Psoas muscle (tissue), 8 donors: ENCODE measurements at regions of chr1 and their contacts with region 1.

Region 1: GRCh38 chr1:214165850-214166374 is 115.0 kb upstream of the SMYD2 start:
- DNase-seq: no peak
- ATAC-seq: no peak
- H3K4me3 ChIP-seq: no peak overlapping the region
- H3K27ac ChIP-seq: no peak overlapping the region
- H3K4me1 ChIP-seq: no peaks in the 10 kb centered on the region
- H3K27me3 ChIP-seq: no peaks in the 10 kb centered on the region
- CTCF ChIP-seq: no peak

Region 2: DNA sequence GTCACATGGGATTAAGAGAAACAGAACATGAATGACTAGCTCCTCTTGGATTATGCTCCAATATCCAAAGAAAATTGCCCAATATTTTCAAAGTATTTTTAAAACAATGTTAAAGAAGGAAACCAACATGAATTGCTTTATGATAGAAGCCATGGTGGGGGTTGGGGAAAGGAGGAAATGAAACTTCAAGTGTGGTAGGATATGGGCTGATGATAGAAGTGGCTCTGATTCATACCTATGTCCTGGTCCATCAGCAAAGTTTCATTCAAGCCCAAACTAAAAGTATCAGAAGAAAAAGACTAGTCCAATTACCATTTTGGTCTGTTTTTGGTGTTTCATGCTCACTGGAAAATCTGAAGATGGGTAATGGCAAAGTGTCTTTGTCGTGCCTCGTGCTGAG is 282.3 kb before region 1 on chr1:
- intact Hi-C with region 1: loop called in 1 of 2 experiments (anchors 2 kb)
- DNase-seq: no peak
- ATAC-seq: no peak
- H3K4me3 ChIP-seq: no peak overlapping the region
- H3K27ac ChIP-seq: no peak overlapping the region
- H3K4me1 ChIP-seq: no peaks in the 10 kb centered on the region
- H3K27me3 ChIP-seq: no peaks in the 10 kb centered on the region
- CTCF ChIP-seq: no peak

Region 3: DNA sequence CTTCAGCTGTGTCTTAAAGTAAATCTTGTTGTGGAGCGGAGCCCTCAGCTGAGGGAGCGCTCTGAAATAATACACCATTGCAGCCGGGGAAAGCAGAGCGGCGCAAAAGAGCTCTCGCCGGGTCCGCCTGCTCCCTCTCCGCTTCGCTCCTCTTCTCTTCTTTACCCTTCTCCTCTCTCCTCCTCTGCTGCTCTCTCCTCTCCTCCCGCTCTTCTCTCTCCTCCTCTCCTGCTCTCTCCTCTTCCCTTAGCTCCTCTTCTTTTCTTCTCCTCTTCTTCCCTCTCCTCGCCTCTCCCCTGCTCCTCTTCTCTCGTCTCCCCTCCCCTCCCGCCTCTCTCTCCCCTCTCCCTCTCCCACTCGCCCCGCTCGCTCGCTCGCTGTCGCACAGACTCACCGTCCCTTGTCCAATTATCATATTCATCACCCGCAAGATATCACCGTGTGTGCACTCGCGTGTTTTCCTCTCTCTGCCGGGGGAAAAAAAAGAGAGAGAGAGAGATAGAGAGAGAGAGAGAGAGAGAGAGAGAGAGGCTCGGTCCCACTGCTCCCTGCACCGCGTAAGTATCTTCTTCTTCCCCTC is 177.9 kb before region 1 on chr1 and contains the start of gene PROX1:
- intact Hi-C with region 1: no loop called
- DNase-seq: peak in 1 of 2 donors; percentile 57
- ATAC-seq: peak; percentile 48 to 90 (median 90)
- H3K4me3 ChIP-seq: peak within 1 kb of the TSS; percentile 72
- H3K27ac ChIP-seq: peak within 1 kb of the TSS; percentile 85
- H3K4me1 ChIP-seq: peaks cover 13% of the 10 kb centered on the region
- H3K27me3 ChIP-seq: peaks cover 0 to 44% (median 4%) of the 10 kb centered on the region in 3 donors
- CTCF ChIP-seq: no peak
- total RNA-seq, gene PROX1: 8.3 to 20.6 (median 18.3) TPM